ENCODE measurements at regions of chr11 and their contacts with region 1.

Region 1: GRCh38 chr11:22130462-22131053 is 62.3 kb upstream of the ANO5 start:
- DNase-seq: no peak
- ATAC-seq: peak; percentile 66 to 92 (median 86)
- H3K4me3 ChIP-seq: no peak overlapping the region
- H3K27ac ChIP-seq: no peak overlapping the region
- H3K4me1 ChIP-seq: no peaks in the 10 kb centered on the region
- H3K27me3 ChIP-seq: no peaks in the 10 kb centered on the region
- CTCF ChIP-seq: peak in 3 of 4 donors; percentile 43 to 49 (median 49)

Region 2: DNA sequence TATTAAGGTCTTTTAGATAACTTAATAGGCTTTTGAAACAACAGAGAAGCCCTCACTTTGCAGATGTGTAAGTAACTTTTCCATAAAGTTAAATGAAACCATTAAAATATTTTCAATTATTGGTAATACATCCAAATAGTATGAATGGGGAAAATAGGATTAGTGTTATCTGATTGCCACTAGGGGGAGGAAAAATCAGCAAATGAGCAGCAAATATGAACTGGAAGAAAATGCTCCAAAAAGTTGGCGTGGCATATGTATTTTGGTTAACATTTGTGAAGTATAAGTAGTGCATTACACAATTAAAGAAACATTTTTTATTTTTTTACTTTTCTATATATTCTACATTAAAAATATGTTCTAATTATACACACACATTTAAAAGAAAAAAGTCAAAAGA is 197.5 kb before region 1 on chr11:
- intact Hi-C with region 1: loop called in 2 of 3 experiments (anchors 5 to 10 kb)
- DNase-seq: no peak
- ATAC-seq: peak in 1 of 4 donors; percentile 62
- H3K4me3 ChIP-seq: no peak overlapping the region
- H3K27ac ChIP-seq: no peak overlapping the region
- H3K4me1 ChIP-seq: no peaks in the 10 kb centered on the region
- H3K27me3 ChIP-seq: no peaks in the 10 kb centered on the region
- CTCF ChIP-seq: peak; percentile 12 to 56 (median 46)

Region 3: GRCh38 chr11:22416462-22416861 is 285.9 kb after region 1 on chr11:
- intact Hi-C with region 1: no loop called
- DNase-seq: no peak
- ATAC-seq: no peak
- H3K4me3 ChIP-seq: no peak overlapping the region
- H3K27ac ChIP-seq: no peak overlapping the region
- H3K4me1 ChIP-seq: no peaks in the 10 kb centered on the region
- H3K27me3 ChIP-seq: no peaks in the 10 kb centered on the region
- CTCF ChIP-seq: no peak

Measured in pancreas (tissue), 10 donors.